ENCODE measurements at regions of chrX and their contacts with region 1.

Region 1: DNA sequence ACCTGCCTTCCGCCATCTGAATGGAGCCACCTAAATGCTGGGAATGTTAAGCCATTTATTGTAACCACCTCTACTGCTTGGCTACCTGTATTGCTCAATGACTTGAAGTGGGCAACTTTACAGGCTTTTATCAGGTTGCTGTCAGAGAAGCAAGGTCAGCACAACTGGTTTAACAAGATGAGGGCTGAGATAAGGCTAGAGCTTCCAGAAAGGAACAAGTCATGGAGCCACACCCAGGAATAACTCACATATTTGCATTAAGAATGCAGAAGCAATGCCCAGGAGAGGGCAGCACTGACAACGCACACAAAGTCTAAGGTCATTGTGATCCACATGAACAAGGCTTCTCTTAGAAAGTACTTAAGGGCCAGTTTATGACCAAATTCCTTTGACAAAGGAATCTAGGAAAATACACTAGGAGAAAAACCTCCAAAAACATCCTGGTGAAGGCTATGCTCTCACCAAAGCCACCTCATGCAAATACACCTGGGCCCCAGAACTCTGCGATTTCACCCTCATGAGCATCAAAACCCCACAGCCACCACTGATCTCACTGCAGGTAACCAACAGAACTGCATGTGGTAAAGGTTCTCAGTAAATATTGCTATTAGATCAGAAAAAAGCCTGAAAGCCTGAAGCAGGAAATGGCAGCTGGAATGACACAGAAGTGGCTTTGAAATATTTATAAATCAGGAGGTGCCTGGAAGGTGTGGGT is 15.0 kb upstream of the STS start:
- DNase-seq: peak; percentile 88 to 93
- H3K4me3 ChIP-seq: no peak overlapping the region
- H3K4me3 Mint-ChIP-seq: peak overlapping the region; percentile 75
- H3K27ac Mint-ChIP-seq: peak overlapping the region; percentile 100
- H3K4me1 ChIP-seq: peaks cover 49% of the 10 kb centered on the region
- H3K4me1 Mint-ChIP-seq: peaks cover 31% of the 10 kb centered on the region
- H3K27me3 ChIP-seq: no peaks in the 10 kb centered on the region
- H3K27me3 Mint-ChIP-seq: no peaks in the 10 kb centered on the region
- CTCF ChIP-seq: peak; percentile 35 to 55

Region 2: GRCh38 chrX:6930302-6930849 is 202.1 kb before region 1 on chrX:
- CTCF ChIA-PET with region 1: no interaction called
- POLR2A ChIA-PET with region 1: no interaction called
- intact Hi-C with region 1: no loop called
- DNase-seq: no peak
- H3K4me3 ChIP-seq: no peak overlapping the region
- H3K4me3 Mint-ChIP-seq: peak overlapping the region; percentile 74
- H3K27ac Mint-ChIP-seq: no peak overlapping the region
- H3K4me1 ChIP-seq: no peaks in the 10 kb centered on the region
- H3K4me1 Mint-ChIP-seq: no peaks in the 10 kb centered on the region
- H3K27me3 ChIP-seq: no peaks in the 10 kb centered on the region
- H3K27me3 Mint-ChIP-seq: no peaks in the 10 kb centered on the region
- CTCF ChIP-seq: no peak

Region 3: GRCh38 chrX:6990552-6991193 is 141.8 kb before region 1 on chrX:
- CTCF ChIA-PET with region 1: no interaction called
- POLR2A ChIA-PET with region 1: no interaction called
- intact Hi-C with region 1: loop called (anchors 1 kb)
- DNase-seq: no peak
- H3K4me3 ChIP-seq: no peak overlapping the region
- H3K4me3 Mint-ChIP-seq: no peak overlapping the region
- H3K27ac Mint-ChIP-seq: peak overlapping the region; percentile 76
- H3K4me1 ChIP-seq: peaks cover 40% of the 10 kb centered on the region
- H3K4me1 Mint-ChIP-seq: peaks cover 7% of the 10 kb centered on the region
- H3K27me3 ChIP-seq: no peaks in the 10 kb centered on the region
- H3K27me3 Mint-ChIP-seq: no peaks in the 10 kb centered on the region
- CTCF ChIP-seq: no peak

Region 4: DNA sequence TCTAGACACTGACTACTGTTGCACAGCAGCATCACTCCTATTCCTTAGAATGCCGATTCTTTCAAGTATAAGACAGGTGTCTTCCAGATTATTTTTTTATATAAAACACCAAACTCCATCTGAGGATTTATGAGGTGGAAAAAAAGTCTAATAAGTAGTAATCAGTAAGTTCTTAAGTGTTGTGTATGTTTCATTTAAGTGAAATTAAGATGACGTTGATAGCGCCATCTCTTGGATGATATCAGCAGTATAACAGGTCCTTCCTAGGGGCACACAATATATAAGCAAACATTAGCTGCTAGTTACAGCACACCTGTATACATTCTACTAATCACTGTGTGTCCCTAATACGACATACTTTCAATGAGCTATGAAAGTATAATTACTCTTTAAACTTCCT is 84.5 kb before region 1 on chrX:
- CTCF ChIA-PET with region 1: no interaction called
- POLR2A ChIA-PET with region 1: no interaction called
- intact Hi-C with region 1: no loop called
- DNase-seq: no peak
- H3K4me3 ChIP-seq: no peak overlapping the region
- H3K4me3 Mint-ChIP-seq: no peak overlapping the region
- H3K27ac Mint-ChIP-seq: no peak overlapping the region
- H3K4me1 ChIP-seq: no peaks in the 10 kb centered on the region
- H3K4me1 Mint-ChIP-seq: no peaks in the 10 kb centered on the region
- H3K27me3 ChIP-seq: no peaks in the 10 kb centered on the region
- H3K27me3 Mint-ChIP-seq: no peaks in the 10 kb centered on the region
- CTCF ChIP-seq: no peak

Region 5: DNA sequence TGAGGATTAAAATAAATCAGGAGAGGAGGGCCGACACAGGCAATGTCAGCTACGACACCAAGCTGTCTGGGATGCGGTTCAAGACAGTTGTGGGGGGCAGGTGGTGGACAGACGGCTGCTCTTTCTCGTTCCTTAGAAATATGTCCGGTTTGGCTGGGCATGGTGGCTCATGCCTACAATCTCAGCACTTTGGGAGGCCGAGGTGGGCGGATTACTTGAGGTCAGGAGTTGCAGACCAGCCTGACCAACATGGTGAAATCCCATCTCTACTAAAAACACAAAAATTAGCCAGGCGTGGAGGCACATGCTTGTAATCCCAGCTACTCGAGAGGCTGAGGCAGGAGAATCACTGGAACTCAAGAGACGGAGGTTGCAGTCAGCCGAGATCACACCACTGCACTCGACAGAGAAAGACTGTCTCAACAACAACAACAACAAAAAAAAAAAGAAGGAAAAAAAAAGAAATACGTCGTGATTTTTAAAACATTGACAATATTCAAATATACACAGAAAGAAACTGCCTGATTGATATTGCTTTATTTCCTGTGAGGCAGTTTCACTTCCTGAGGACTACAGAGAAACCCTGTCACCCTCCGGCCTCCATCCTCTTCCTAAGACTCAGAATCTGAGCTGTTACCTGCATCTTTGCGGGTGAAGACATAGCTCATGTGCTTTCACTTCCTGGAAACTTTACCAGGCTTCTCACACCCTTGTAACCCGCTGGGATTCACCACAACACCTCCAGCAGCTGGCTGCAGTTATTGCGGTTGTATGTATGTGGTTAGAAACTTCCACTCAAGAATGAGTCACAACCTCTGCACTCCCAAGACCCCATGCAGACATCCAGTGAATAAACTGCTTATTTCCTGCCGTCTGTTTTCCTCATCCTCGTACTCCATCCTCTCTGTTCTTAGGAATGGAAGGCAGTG is 48.8 kb before region 1 on chrX:
- CTCF ChIA-PET with region 1: no interaction called
- POLR2A ChIA-PET with region 1: no interaction called
- intact Hi-C with region 1: no loop called
- DNase-seq: no peak
- H3K4me3 ChIP-seq: no peak overlapping the region
- H3K4me3 Mint-ChIP-seq: no peak overlapping the region
- H3K27ac Mint-ChIP-seq: no peak overlapping the region
- H3K4me1 ChIP-seq: 0 out of 2 replicates have a peak, but pooled peaks cover 5% of the 10 kb centered on the region
- H3K4me1 Mint-ChIP-seq: peaks cover 5% of the 10 kb centered on the region
- H3K27me3 ChIP-seq: no peaks in the 10 kb centered on the region
- H3K27me3 Mint-ChIP-seq: no peaks in the 10 kb centered on the region
- CTCF ChIP-seq: no peak

Region 6: DNA sequence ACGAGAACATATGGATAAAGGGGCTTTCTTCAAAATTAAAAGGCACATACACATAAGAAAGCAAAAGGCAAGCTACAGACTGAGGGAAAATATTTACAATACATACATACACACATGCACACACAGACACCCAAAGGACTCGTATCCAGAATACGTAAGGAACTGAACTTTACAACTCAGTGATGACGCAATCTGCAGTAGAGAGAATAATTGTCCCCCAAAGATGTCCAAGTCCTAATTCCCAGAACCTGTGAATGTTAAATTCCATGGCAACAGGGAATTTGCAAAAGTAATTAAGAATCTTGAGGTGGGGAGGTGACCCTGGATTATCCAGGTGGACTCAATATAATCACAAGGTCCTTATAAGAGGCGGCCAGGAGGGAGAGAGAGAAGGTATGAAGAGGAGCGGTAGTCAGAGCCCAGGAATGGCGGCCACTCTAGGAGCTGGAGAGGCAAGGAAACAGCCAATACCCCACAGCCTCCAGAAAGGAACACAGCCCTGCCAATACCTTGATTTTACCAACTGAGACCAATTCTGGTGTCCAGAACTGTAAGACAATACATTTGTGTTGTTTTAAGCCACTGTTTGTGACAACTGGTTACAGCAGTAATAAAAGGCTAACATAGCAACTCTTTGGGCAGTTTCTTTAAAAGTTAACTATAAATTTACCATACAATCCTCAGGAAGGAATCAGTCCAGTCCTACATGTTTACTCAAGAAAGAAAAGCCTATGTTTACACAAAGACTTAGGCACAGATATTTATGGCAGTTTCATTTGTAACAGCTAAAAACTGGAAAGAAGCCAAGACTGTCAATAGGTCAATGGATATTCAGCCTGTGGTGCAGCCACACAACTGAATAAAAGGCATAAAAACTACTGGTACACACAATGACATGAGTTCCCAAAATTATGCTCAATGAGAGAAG is 12.3 kb before region 1 on chrX:
- CTCF ChIA-PET with region 1: interaction called, 3 read pairs
- POLR2A ChIA-PET with region 1: no interaction called
- intact Hi-C with region 1: loop called (anchors 1 kb)
- DNase-seq: no peak
- H3K4me3 ChIP-seq: no peak overlapping the region
- H3K4me3 Mint-ChIP-seq: peak overlapping the region; percentile 55
- H3K27ac Mint-ChIP-seq: peak overlapping the region; percentile 77
- H3K4me1 ChIP-seq: peaks cover 34% of the 10 kb centered on the region
- H3K4me1 Mint-ChIP-seq: peaks cover 12% of the 10 kb centered on the region
- H3K27me3 ChIP-seq: no peaks in the 10 kb centered on the region
- H3K27me3 Mint-ChIP-seq: no peaks in the 10 kb centered on the region
- CTCF ChIP-seq: no peak

Region 7: DNA sequence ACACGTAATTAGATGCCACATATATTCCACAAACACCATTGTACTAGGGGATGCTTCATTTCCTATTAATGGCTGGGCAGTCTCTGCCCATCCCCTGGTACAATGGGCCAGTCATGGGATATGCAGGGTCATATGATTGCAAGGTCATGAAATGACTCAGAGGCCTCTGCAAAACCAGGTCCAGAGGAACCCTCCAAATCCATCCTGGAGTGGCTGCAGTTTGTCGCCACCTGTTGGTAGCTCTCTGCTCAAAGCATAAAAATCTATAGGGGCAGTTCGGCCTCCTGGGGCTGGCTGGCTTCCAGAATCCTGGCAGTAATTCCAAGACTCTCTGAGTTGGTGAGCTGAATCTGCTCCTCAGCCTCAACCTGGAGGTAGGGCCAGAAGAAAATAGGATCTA is 38.4 kb after region 1 on chrX:
- CTCF ChIA-PET with region 1: no interaction called
- POLR2A ChIA-PET with region 1: no interaction called
- intact Hi-C with region 1: loop called (anchors 1 kb)
- DNase-seq: peak; percentile 42 to 44
- H3K4me3 ChIP-seq: no peak overlapping the region
- H3K4me3 Mint-ChIP-seq: no peak overlapping the region
- H3K27ac Mint-ChIP-seq: no peak overlapping the region
- H3K4me1 ChIP-seq: no peaks in the 10 kb centered on the region
- H3K4me1 Mint-ChIP-seq: no peaks in the 10 kb centered on the region
- H3K27me3 ChIP-seq: no peaks in the 10 kb centered on the region
- H3K27me3 Mint-ChIP-seq: no peaks in the 10 kb centered on the region
- CTCF ChIP-seq: peak; percentile 18 to 20

Region 8: DNA sequence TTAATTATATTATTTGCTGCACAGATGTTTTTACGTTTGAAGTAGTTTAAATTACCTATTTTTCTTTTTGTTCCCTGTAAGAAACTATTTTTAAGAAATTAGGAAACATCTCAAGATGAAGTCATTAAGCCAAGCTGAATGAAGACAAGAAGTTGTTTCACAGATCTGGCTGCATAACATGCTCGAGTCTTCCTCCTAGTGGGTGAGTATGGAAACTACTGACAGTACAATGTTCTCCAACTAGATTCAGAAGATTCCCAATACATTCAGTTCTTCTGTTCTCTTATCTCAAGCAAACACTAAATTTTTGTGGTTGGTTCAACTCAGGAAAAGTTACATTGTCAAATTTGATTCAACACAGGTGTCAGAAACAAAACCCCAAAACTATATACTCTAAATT is 453.6 kb after region 1 on chrX:
- CTCF ChIA-PET with region 1: no interaction called
- POLR2A ChIA-PET with region 1: no interaction called
- intact Hi-C with region 1: loop called (anchors 10 kb)
- DNase-seq: peak in 1 of 2 experiments; percentile 13
- H3K4me3 ChIP-seq: no peak overlapping the region
- H3K4me3 Mint-ChIP-seq: no peak overlapping the region
- H3K27ac Mint-ChIP-seq: no peak overlapping the region
- H3K4me1 ChIP-seq: no peaks in the 10 kb centered on the region
- H3K4me1 Mint-ChIP-seq: no peaks in the 10 kb centered on the region
- H3K27me3 ChIP-seq: no peaks in the 10 kb centered on the region
- H3K27me3 Mint-ChIP-seq: no peaks in the 10 kb centered on the region
- CTCF ChIP-seq: peak in 1 of 2 experiments; percentile 58

Region 9: GRCh38 chrX:7720519-7720918 is 588.0 kb after region 1 on chrX:
- CTCF ChIA-PET with region 1: no interaction called
- POLR2A ChIA-PET with region 1: no interaction called
- intact Hi-C with region 1: no loop called
- DNase-seq: no peak
- H3K4me3 ChIP-seq: no peak overlapping the region
- H3K4me3 Mint-ChIP-seq: no peak overlapping the region
- H3K27ac Mint-ChIP-seq: no peak overlapping the region
- H3K4me1 ChIP-seq: no peaks in the 10 kb centered on the region
- H3K4me1 Mint-ChIP-seq: no peaks in the 10 kb centered on the region
- H3K27me3 ChIP-seq: no peaks in the 10 kb centered on the region
- H3K27me3 Mint-ChIP-seq: no peaks in the 10 kb centered on the region
- CTCF ChIP-seq: no peak

Measured in Caco-2 (cell line).